Posterior vena cava (tissue), 2 donors: ENCODE measurements at regions of chr17 and their contacts with region 1.

Region 1: GRCh38 chr17:30939051-30939689 is 17.4 kb downstream of the ADAP2 start:
- DNase-seq: peak; percentile 15

Region 2: DNA sequence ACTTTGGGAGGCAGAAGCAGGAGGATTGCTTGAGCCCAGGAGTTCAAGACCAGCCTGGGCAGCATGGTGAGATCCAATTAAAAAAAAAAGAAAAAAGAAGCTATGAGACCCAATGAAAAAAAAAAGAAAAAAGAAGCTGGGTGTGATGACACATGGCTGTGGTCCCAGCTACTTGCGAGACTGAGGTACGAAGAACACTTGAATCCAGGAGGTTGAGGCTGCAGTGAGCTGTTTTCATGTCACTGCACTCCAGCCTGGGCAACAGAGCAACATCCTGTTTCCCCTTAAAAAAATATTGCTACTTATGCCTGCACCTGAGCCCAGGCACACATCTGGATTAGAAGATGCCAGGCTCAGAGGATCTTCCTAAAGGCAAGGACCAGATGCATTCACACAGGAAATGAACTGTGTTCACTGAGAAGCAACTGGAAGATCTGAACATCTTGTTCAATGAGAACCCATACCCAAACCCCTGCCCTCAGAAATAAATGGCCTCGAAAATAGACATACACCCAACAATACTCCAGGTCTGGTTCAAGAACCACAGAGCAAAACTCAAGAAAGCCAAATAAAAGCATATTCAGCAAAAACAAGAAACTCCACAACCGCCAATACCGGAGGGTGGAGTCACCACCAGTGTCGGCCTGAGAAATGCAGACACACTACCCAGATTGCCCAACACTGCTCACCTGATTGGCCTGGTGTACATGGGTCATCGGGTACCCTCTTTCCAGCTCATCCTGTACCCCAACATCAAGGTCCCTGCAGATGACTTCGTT is 36.1 kb after region 1 on chr17:
- intact Hi-C with region 1: loop called in 1 of 2 experiments (anchors 1 kb)
- DNase-seq: peak; percentile 29

Region 3: GRCh38 chr17:31015639-31016038 is 76.5 kb after region 1 on chr17:
- intact Hi-C with region 1: no loop called
- DNase-seq: no peak